CD8-positive, alpha-beta T cell (primary cell): ENCODE measurements at regions of chrX and their contacts with region 1.

Region 1: GRCh38 chrX:74291964-74292807 is 11.8 kb upstream of the ZCCHC13 start:
- DNase-seq: peak; percentile 61 to 93 (median 80)
- ATAC-seq: peak; percentile 82
- H3K4me3 ChIP-seq: peak overlapping the region; percentile 83 to 86
- H3K4me3 Mint-ChIP-seq: peak overlapping the region; percentile 92
- H3K27ac ChIP-seq: peak overlapping the region; percentile 84 to 89
- H3K27ac Mint-ChIP-seq: peak overlapping the region; percentile 95
- H3K4me1 ChIP-seq: peaks cover 7% of the 10 kb centered on the region
- H3K4me1 Mint-ChIP-seq: peaks cover 21% of the 10 kb centered on the region
- H3K27me3 ChIP-seq: no peaks in the 10 kb centered on the region
- H3K27me3 Mint-ChIP-seq: no peaks in the 10 kb centered on the region
- CTCF ChIP-seq: no peak

Region 2: GRCh38 chrX:73943693-73944562 is 348.3 kb before region 1 on chrX:
- CTCF ChIA-PET with region 1: no interaction called
- POLR2A ChIA-PET with region 1: interaction called, 4 read pairs
- intact Hi-C with region 1: loop called (anchors 5 to 10 kb)
- DNase-seq: peak; percentile 68 to 94 (median 84)
- ATAC-seq: peak; percentile 99
- H3K4me3 ChIP-seq: peak overlapping the region; percentile 88 to 98
- H3K4me3 Mint-ChIP-seq: peak overlapping the region; percentile 93
- H3K27ac ChIP-seq: peak overlapping the region; percentile 79 to 98
- H3K27ac Mint-ChIP-seq: peak overlapping the region; percentile 98
- H3K4me1 ChIP-seq: peaks cover 12% of the 10 kb centered on the region
- H3K4me1 Mint-ChIP-seq: peaks cover 27% of the 10 kb centered on the region
- H3K27me3 ChIP-seq: no peaks in the 10 kb centered on the region
- H3K27me3 Mint-ChIP-seq: no peaks in the 10 kb centered on the region
- CTCF ChIP-seq: no peak

Region 3: DNA sequence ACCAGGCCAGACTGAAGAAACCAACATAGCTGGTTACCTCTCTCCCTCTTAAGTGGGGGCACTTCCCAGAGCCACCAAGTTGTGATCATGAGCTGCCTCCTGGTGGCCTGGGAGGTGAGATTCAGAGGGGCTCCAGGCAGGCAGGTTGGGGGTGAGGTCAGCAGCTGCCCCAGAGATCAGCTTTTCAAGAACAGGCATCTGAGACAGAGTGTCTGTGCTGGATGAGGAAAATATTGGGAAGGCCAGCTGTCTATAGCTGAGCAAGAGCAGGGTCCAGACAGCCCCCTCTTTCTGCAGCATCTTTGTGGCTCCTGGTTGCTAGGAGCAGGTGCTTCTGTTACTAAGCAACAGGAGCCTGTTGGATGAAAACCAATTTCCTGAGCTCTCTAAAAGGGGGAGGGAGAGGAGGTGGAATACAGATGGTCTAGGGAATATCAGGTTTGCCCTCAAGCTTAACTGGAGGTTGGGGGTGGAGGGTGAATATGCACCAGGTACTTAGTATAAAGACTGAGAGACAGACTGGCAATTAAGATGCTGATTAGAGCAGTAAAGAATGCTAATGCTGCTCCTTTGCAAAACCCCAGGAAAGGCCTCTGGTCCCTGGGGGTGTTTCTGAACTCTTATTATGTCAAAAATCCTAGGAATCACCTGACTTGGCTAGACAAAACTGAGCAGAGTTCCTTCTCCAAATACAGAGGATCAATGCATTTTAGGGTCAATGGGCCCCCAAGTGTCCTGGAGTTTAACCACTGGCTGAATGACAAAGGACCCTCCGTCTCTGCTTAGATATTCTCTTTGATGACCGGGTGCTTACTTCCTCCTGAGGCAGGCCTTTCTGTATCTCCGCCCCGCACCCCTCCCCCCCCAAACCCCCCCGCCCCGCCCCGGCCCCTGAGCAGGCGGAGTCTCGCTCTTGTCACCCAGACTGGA is 33.2 kb after region 1 on chrX:
- CTCF ChIA-PET with region 1: no interaction called
- POLR2A ChIA-PET with region 1: no interaction called
- intact Hi-C with region 1: no loop called
- DNase-seq: peak in 2 of 9 experiments; percentile 11 to 28
- ATAC-seq: no peak
- H3K4me3 ChIP-seq: no peak overlapping the region
- H3K4me3 Mint-ChIP-seq: no peak overlapping the region
- H3K27ac ChIP-seq: no peak overlapping the region
- H3K27ac Mint-ChIP-seq: no peak overlapping the region
- H3K4me1 ChIP-seq: no peaks in the 10 kb centered on the region
- H3K4me1 Mint-ChIP-seq: no peaks in the 10 kb centered on the region
- H3K27me3 ChIP-seq: no peaks in the 10 kb centered on the region
- H3K27me3 Mint-ChIP-seq: no peaks in the 10 kb centered on the region
- CTCF ChIP-seq: no peak

Region 4: DNA sequence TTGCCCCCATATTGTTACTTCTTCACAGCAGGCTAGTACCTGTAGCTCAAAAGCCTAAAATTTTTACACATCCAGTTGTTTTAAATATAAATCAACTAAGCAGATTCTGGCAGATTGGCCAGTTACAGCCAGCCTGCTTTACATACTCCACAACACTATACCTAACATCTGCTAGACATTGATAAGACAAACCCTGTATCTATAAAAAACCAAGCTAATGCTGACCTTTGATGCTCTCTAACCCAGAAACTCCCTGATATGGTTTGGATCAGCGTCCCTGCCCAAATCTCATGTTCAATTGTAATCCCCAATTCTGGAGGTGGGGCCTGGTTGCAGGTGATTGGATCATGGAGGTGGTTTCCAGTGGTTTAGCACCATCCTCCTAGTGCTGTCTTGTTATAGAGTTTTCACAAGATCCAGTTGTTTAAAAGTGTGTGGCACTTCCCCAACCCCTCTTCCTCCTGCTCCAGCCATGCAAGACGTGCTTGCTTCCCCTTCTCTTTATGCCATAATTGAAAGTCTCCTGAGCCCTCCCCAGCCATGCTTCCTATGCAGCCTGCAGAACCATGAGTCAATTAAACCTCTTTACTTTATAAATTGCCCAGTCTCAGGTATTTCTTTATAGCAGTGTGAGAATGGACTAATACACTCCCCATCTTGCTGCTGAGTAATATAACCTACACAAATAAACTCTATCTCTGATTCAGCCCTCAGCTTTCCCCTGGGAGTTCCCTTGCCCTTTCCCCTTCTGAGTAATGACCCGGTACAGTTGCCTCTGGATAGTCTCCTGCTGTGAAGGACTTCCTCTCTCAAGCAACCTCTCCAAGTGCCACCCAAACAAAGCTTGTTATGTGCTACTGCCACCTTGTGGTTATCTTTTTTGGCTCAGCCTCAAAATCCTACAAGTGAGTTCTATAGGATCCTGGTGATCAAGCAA is 51.4 kb after region 1 on chrX:
- CTCF ChIA-PET with region 1: no interaction called
- POLR2A ChIA-PET with region 1: no interaction called
- intact Hi-C with region 1: loop called in 1 of 2 experiments (anchors 5 kb)
- DNase-seq: peak; percentile 1 to 67 (median 33)
- ATAC-seq: peak; percentile 40
- H3K4me3 ChIP-seq: no peak overlapping the region
- H3K4me3 Mint-ChIP-seq: no peak overlapping the region
- H3K27ac ChIP-seq: no peak overlapping the region
- H3K27ac Mint-ChIP-seq: no peak overlapping the region
- H3K4me1 ChIP-seq: no peaks in the 10 kb centered on the region
- H3K4me1 Mint-ChIP-seq: peaks cover 2% of the 10 kb centered on the region
- H3K27me3 ChIP-seq: no peaks in the 10 kb centered on the region
- H3K27me3 Mint-ChIP-seq: peaks cover 3% of the 10 kb centered on the region
- CTCF ChIP-seq: peak; percentile 36

Region 5: GRCh38 chrX:74550295-74550802 is 258.2 kb after region 1 on chrX:
- CTCF ChIA-PET with region 1: no interaction called
- POLR2A ChIA-PET with region 1: no interaction called
- intact Hi-C with region 1: loop called in 1 of 2 experiments (anchors 5 kb)
- DNase-seq: peak; percentile 63 to 93 (median 83)
- ATAC-seq: peak; percentile 97
- H3K4me3 ChIP-seq: no peak overlapping the region
- H3K4me3 Mint-ChIP-seq: peak overlapping the region; percentile 66
- H3K27ac ChIP-seq: no peak overlapping the region
- H3K27ac Mint-ChIP-seq: no peak overlapping the region
- H3K4me1 ChIP-seq: no peaks in the 10 kb centered on the region
- H3K4me1 Mint-ChIP-seq: peaks cover 2% of the 10 kb centered on the region
- H3K27me3 ChIP-seq: no peaks in the 10 kb centered on the region
- H3K27me3 Mint-ChIP-seq: no peaks in the 10 kb centered on the region
- CTCF ChIP-seq: peak; percentile 84

Region 6: DNA sequence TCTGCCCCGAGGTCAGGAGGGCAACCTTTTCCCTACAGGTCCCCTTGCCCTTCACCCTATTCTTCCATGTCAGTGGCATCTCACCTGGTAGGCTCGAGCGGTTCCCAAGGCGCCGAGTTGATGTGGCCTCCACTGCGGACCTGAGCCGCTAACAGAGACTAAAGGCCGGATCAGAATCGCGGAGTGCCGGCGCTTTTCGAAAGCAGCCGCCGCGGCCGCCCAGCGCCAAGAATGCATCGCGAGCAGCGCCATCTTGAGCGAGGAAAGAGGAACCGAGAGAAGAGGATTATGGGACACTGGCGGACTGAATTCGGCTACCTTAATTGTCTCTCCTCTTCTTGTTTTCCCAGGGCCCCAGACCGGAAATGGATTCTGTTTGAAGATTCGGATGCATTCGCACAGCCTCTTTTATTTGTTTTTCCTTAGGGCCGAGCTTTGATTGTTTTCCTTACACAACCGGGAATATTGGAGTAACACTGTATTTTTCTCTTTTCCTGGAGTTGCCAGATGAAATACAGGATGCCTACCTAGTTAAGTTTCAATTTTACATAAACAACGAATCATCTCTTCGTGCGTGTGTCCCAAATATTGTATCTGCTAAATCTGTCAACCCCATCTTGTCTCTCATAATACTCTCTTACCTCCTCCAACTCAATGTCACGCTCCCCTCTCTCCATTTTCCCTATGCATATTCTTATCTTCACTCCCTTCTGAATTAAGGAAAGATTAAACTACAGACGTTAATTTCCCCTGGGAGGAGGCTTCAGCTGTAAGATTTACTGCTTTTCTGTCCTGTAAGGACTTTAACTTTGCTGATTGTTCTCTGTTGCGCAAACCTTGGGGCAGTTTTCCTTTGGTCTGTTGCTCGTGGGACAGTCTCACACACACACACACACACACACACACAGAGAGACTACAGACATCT is 864.1 kb after region 1 on chrX and contains the start of gene ABCB7:
- CTCF ChIA-PET with region 1: no interaction called
- POLR2A ChIA-PET with region 1: no interaction called
- intact Hi-C with region 1: loop called in 1 of 2 experiments (anchors 10 kb)
- DNase-seq: peak; percentile 19 to 83 (median 63)
- ATAC-seq: peak; percentile 91
- H3K4me3 ChIP-seq: peak within 1 kb of the TSS; percentile 87 to 96
- H3K4me3 Mint-ChIP-seq: peak within 1 kb of the TSS; percentile 94
- H3K27ac ChIP-seq: peak within 1 kb of the TSS; percentile 77 to 80
- H3K27ac Mint-ChIP-seq: peak within 1 kb of the TSS; percentile 98
- H3K4me1 ChIP-seq: peaks cover 17% of the 10 kb centered on the region
- H3K4me1 Mint-ChIP-seq: peaks cover 49% of the 10 kb centered on the region
- H3K27me3 ChIP-seq: no peaks in the 10 kb centered on the region
- H3K27me3 Mint-ChIP-seq: no peaks in the 10 kb centered on the region
- CTCF ChIP-seq: no peak
- total RNA-seq, gene ABCB7: 16.6 to 17.3 TPM

Region 7: DNA sequence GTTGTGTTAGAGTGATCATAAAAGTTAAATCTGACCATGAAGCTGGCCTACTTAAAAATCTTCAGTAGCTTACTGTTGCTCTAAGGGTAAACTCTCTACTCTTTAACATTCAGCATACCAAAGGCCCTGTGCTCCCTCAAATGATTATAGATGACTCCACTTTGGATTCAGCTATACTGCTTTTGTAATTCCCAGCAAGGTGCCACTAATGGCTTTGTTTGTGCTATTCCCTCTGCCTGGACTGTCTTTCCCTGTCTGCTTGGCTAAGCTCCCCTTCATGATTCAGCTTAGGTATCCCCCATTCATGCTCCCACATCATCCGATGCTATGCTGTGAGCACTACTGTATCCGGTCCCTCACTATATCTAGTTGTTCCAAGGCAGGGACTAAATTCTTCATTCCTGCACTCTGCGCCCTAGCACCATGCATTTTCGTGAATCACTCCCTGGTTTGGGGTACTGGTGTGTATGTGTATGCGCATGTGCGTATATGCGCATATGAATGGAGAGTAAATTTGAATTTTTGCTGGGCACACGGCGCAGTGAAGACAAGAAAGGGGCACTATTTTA is 1880.2 kb after region 1 on chrX:
- CTCF ChIA-PET with region 1: no interaction called
- POLR2A ChIA-PET with region 1: no interaction called
- intact Hi-C with region 1: loop called in 1 of 2 experiments (anchors 5 kb)
- DNase-seq: no peak
- ATAC-seq: peak; percentile 51
- H3K4me3 ChIP-seq: peak overlapping the region; percentile 70 to 71
- H3K4me3 Mint-ChIP-seq: peak overlapping the region; percentile 94
- H3K27ac ChIP-seq: peak overlapping the region; percentile 81 to 90
- H3K27ac Mint-ChIP-seq: peak overlapping the region; percentile 98
- H3K4me1 ChIP-seq: peaks cover 32% of the 10 kb centered on the region
- H3K4me1 Mint-ChIP-seq: peaks cover 57% of the 10 kb centered on the region
- H3K27me3 ChIP-seq: no peaks in the 10 kb centered on the region
- H3K27me3 Mint-ChIP-seq: no peaks in the 10 kb centered on the region
- CTCF ChIP-seq: no peak